Prostate gland (tissue), 2 donors: ENCODE measurements at regions of chr7 and their contacts with region 1.

Region 1: GRCh38 chr7:35906191-35906908 is 105.5 kb downstream of the SEPTIN7 start:
- DNase-seq: peak; percentile 76
- H3K4me3 ChIP-seq: no peak overlapping the region
- H3K27ac ChIP-seq: no peak overlapping the region
- H3K4me1 ChIP-seq: no peaks in the 10 kb centered on the region
- H3K27me3 ChIP-seq: no peaks in the 10 kb centered on the region
- CTCF ChIP-seq: peak; percentile 76 to 93 (median 90)
- POLR2A ChIP-seq: no peak

Region 2: DNA sequence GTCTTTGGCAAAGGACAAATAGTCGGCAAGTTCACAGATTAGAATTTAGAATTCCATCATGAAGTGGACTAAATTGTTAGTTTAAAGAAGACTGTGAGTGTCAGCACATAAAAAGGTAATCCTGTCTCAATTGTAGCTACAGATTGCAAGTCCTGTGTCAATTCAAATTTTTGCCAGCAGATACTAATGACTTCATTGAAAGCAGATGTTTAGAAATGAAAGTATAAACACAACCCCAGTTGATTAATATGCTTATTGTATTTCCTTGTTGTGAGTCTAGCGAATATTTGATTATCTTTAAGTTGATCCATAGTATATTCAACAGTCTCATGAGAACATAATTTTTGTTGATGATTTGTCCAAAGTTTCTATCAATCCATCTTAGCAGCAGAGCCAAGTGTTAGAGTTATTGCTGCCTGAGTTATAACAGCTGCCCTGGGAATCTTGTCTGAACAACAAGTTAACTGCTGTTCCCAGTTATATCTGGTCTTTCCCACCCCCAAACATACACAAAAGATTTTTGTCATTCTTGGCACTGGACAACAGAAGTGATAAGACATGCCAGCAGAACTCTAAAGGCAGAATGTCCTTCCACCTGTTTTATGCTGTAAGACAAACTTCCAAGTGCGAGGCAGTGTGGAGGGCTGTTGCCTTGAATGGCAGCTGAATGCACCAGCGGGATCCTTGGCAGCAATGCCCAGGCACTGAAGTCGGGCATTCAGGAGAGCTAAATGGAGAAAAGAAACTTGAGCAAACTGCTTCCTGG is 190.1 kb before region 1 on chr7:
- intact Hi-C with region 1: loop called (anchors 2 kb)
- DNase-seq: peak; percentile 42
- H3K4me3 ChIP-seq: no peak overlapping the region
- H3K27ac ChIP-seq: no peak overlapping the region
- H3K4me1 ChIP-seq: no peaks in the 10 kb centered on the region
- H3K27me3 ChIP-seq: no peaks in the 10 kb centered on the region
- CTCF ChIP-seq: no peak
- POLR2A ChIP-seq: no peak

Region 3: GRCh38 chr7:35975851-35976454 is 69.6 kb after region 1 on chr7:
- intact Hi-C with region 1: loop called (anchors 10 kb)
- DNase-seq: peak; percentile 73
- H3K4me3 ChIP-seq: no peak overlapping the region
- H3K27ac ChIP-seq: no peak overlapping the region
- H3K4me1 ChIP-seq: no peaks in the 10 kb centered on the region
- H3K27me3 ChIP-seq: no peaks in the 10 kb centered on the region
- CTCF ChIP-seq: peak; percentile 69 to 75 (median 70)
- POLR2A ChIP-seq: no peak

Region 4: GRCh38 chr7:36312344-36313334 is 406.3 kb after region 1 on chr7:
- intact Hi-C with region 1: loop called (anchors 10 kb)
- DNase-seq: peak; percentile 48
- H3K4me3 ChIP-seq: no peak overlapping the region
- H3K27ac ChIP-seq: no peak overlapping the region
- H3K4me1 ChIP-seq: no peaks in the 10 kb centered on the region
- H3K27me3 ChIP-seq: no peaks in the 10 kb centered on the region
- CTCF ChIP-seq: peak in 3 of 4 experiments; percentile 24 to 69 (median 54)
- POLR2A ChIP-seq: no peak